Activated CD4-positive, alpha-beta T cell treated with anti-CD3 and anti-CD28 coated beads, Interleukin-2, amount 10 ng/mL, durations not matched to agents 24 days and 14 days (primary cell): ENCODE measurements at regions of chr19 and their contacts with region 1.

Region 1: GRCh38 chr19:17938092-17938845 is 5.5 kb downstream of the CCDC124 start:
- DNase-seq: peak; percentile 94
- H3K4me3 Mint-ChIP-seq: no peak overlapping the region
- H3K27ac Mint-ChIP-seq: no peak overlapping the region
- H3K4me1 Mint-ChIP-seq: peaks cover 5% of the 10 kb centered on the region
- H3K27me3 Mint-ChIP-seq: no peaks in the 10 kb centered on the region

Region 2: GRCh38 chr19:18000935-18001778 is 62.9 kb after region 1 on chr19:
- intact Hi-C with region 1: loop called (anchors 1 kb)
- DNase-seq: peak; percentile 97
- H3K4me3 Mint-ChIP-seq: peak overlapping the region; percentile 93
- H3K27ac Mint-ChIP-seq: peak overlapping the region; percentile 99
- H3K4me1 Mint-ChIP-seq: peaks cover 15% of the 10 kb centered on the region
- H3K27me3 Mint-ChIP-seq: no peaks in the 10 kb centered on the region